ENCODE measurements at regions of chr1 and their contacts with region 1.

Region 1: GRCh38 chr1:160474392-160475242 is 48.4 kb downstream of the SLAMF6 start:
- DNase-seq: peak; percentile 56
- H3K4me3 Mint-ChIP-seq: no peak overlapping the region
- H3K27ac Mint-ChIP-seq: no peak overlapping the region
- H3K4me1 Mint-ChIP-seq: peaks cover 12% of the 10 kb centered on the region
- H3K27me3 Mint-ChIP-seq: no peaks in the 10 kb centered on the region

Region 2: DNA sequence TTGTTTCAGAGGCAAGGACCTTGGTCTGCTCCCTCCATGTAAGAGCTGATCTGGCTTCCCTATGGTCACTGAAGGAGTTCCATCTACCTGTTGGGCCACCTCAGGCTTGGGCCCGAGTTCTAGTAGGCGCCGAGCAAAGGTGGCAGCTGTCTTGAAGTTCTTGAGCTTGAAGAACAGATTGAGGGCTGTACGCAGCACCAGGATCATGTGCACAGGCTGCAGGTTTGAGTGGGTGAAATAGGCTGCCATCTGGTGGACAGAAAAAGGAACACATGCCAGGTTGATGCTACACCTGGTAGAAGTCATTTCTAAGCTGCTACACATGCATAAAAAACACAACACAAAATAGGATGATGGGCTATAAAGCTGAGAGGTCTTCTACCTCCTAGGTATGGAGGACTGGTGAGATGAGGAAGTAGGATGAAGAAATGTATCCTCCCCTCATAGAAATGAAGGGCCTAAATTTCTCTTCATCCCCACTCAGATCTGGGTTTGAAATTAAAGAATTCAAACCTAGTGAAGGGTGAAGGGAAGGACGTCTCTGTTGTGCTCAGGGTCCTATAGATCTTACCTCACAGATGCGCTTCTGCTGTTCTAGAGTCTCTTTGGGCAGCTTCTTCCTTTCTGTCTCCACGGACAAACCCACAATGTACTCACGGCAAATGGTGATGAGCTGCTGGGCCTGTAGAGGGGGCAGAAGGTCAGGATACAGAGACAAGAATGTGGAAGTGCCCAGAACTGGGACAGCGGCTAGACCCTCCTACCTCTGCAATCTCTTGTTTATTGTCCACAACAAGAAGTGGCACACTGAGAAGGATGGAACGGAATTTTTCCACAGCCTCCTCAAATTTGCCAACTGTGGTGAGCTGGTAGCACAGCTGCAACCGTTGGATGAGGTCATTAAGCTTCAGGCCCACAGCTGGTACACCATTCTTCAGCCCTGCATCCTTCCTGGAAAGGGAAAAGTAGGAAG is 183.1 kb before region 1 on chr1:
- intact Hi-C with region 1: no loop called
- DNase-seq: peak; percentile 90
- H3K4me3 Mint-ChIP-seq: no peak overlapping the region
- H3K27ac Mint-ChIP-seq: peak overlapping the region; percentile 73
- H3K4me1 Mint-ChIP-seq: peaks cover 2% of the 10 kb centered on the region
- H3K27me3 Mint-ChIP-seq: no peaks in the 10 kb centered on the region

Region 3: GRCh38 chr1:160451119-160451858 is 23.3 kb before region 1 on chr1:
- intact Hi-C with region 1: loop called (anchors 1 kb)
- DNase-seq: peak; percentile 60
- H3K4me3 Mint-ChIP-seq: peak overlapping the region; percentile 42
- H3K27ac Mint-ChIP-seq: peak overlapping the region; percentile 87
- H3K4me1 Mint-ChIP-seq: peaks cover 65% of the 10 kb centered on the region
- H3K27me3 Mint-ChIP-seq: no peaks in the 10 kb centered on the region

Region 4: GRCh38 chr1:160460683-160461287 is 13.8 kb before region 1 on chr1:
- intact Hi-C with region 1: loop called (anchors 1 kb)
- DNase-seq: peak; percentile 72
- H3K4me3 Mint-ChIP-seq: peak overlapping the region; percentile 77
- H3K27ac Mint-ChIP-seq: peak overlapping the region; percentile 98
- H3K4me1 Mint-ChIP-seq: peaks cover 74% of the 10 kb centered on the region
- H3K27me3 Mint-ChIP-seq: no peaks in the 10 kb centered on the region

Region 5: GRCh38 chr1:160496334-160496733 is 21.7 kb after region 1 on chr1:
- intact Hi-C with region 1: loop called (anchors 2 kb)
- DNase-seq: no peak
- H3K4me3 Mint-ChIP-seq: no peak overlapping the region
- H3K27ac Mint-ChIP-seq: peak overlapping the region; percentile 55
- H3K4me1 Mint-ChIP-seq: peaks cover 33% of the 10 kb centered on the region
- H3K27me3 Mint-ChIP-seq: no peaks in the 10 kb centered on the region